Right ventricle myocardium superior (tissue), 1 donor: ENCODE measurements at regions of chr4 and their contacts with region 1.

Region 1: GRCh38 chr4:8168232-8168631 is 9.6 kb upstream of the ABLIM2 start:
- DNase-seq: no peak
- ATAC-seq: no peak

Region 2: GRCh38 chr4:8410641-8411271 is 242.5 kb after region 1 on chr4:
- intact Hi-C with region 1: loop called (anchors 10 kb)
- DNase-seq: peak; percentile 83
- ATAC-seq: peak; percentile 80